Calu3 (cell line): ENCODE measurements at regions of chr11 and their contacts with region 1.

Region 1: DNA sequence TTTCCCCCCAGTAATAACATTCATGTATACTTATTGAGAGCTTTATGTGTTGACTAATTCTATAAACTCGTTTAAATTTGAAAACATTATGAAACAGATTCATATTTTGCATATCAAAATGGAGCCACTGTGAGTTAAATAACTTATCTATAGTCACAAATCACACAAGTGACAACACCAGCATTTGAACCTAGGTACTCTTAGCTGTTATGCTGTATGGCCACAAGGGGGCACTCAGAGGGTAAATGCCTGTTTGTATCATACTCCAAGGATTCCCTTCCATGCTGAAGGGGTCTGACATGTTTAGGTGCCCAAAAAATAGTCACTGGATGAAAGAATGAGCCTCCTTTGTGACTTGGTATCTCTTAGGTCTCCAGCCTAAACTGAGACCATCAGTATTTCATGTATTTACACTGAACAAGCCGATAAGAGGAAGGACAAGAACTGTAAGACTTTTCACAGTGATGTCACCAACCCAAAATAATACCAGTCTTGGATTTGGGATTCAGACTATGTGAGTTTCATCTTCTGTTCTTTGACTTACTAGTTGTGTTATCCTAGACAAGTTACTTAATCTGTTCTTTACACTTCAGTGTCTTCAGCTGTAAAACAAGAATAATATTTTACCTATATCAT is 12.2 kb upstream of the OR52D1 start:
- DNase-seq: peak; percentile 54
- H3K4me3 Mint-ChIP-seq: no peak overlapping the region
- H3K27ac Mint-ChIP-seq: no peak overlapping the region
- H3K4me1 Mint-ChIP-seq: no peaks in the 10 kb centered on the region
- H3K27me3 Mint-ChIP-seq: peaks cover 21% of the 10 kb centered on the region
- CTCF ChIP-seq: peak; percentile 41

Region 2: DNA sequence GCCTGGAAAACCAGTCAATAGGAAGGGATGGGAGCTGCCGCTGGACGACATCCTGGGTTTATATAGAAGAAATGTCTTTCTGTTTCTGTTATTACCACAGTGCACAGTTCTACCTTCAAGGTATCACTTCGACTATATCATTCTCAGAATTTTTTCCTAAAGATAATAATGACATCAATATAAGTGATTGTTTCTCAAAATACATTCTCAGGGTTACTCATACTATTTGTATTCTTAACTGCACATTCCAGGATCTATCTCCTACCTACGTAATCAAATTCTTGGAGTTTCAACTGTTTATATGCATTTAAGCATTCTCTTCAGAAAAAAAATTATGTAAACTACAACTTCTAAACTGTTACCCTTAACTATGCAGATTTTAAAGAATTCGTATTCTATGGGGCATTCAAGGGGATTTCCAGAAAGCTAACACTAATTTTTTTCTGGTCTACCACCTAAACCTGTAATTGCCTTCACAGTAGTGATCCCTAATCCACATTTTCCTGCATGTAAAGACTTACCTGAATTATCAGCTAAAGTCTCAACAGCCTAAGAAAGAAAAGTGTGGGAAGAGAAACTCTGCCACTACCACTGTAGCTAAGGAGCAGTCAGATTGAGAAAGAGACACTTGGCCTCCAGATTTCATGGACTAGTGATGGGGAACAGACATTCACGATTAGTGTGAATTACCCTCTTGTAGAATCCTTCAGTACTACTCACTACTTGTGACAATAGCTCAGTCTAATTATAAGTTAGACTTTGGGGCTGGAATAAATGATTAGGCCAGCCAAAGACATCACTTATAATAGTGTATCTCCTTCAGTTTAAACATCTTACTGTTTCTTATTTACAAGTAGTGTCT is 132.6 kb before region 1 on chr11 and contains the start of gene OR51B5:
- CTCF ChIA-PET with region 1: no interaction called
- intact Hi-C with region 1: no loop called
- DNase-seq: no peak
- H3K4me3 Mint-ChIP-seq: no peak within 1 kb of the TSS
- H3K27ac Mint-ChIP-seq: no peak within 1 kb of the TSS
- H3K4me1 Mint-ChIP-seq: no peaks in the 10 kb centered on the region
- H3K27me3 Mint-ChIP-seq: peaks cover 42% of the 10 kb centered on the region
- CTCF ChIP-seq: no peak
- total RNA-seq, gene OR51B5: not detected in 2 replicates

Region 3: GRCh38 chr11:5553347-5553746 is 77.0 kb after region 1 on chr11:
- CTCF ChIA-PET with region 1: interaction called, 4 read pairs
- intact Hi-C with region 1: loop called (anchors 1 kb)
- DNase-seq: no peak
- H3K4me3 Mint-ChIP-seq: no peak overlapping the region
- H3K27ac Mint-ChIP-seq: no peak overlapping the region
- H3K4me1 Mint-ChIP-seq: peaks cover 7% of the 10 kb centered on the region
- H3K27me3 Mint-ChIP-seq: peaks cover 32% of the 10 kb centered on the region
- CTCF ChIP-seq: no peak